ENCODE measurements at regions of chr1 and their contacts with region 1.

Region 1: DNA sequence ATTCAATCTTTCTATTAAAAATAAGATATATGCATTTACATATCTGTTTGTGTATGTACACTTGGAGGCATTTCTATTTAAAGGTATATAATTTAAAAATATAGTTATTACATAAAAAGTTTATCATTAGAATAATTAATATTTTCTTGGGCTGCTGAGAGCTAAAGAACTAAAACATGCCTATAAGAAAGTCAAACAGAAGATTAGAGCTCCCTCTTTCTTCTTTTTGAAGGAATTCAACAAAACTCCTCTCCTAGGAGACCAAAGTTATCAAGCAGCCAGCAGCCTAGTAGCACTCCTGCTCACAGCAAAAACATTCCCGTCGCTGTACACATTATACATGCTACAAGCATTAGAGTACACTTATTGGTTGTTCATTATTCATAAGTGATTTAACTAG is 216.4 kb downstream of the VAV3 start:
- DNase-seq: no peak
- H3K4me3 ChIP-seq: no peak overlapping the region
- H3K27ac ChIP-seq: no peak overlapping the region
- H3K4me1 ChIP-seq: no peaks in the 10 kb centered on the region
- H3K27me3 ChIP-seq: no peaks in the 10 kb centered on the region
- CTCF ChIP-seq: peak in 1 of 6 experiments; percentile 37
- POLR2A ChIP-seq: no peak

Region 2: DNA sequence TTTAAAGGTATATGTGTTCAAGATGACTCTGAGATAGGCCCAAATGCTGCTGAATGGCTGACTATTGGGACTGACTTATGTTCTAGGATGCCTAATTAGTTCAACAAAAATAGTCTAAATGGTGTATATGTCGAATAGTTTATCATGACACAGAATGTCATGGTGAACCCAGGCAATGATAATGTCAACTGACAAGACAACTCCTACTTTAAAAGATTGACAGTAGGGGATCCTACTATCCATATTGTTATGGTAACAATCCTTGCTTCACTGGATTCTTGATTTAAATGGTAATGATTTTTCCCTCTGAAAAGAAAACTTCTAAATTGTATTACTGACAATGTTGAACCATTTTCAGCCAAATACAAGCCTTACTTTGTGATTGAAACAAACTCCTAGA is 328.0 kb before region 1 on chr1:
- intact Hi-C with region 1: loop called in 1 of 2 experiments (anchors 10 kb)
- DNase-seq: no peak
- H3K4me3 ChIP-seq: no peak overlapping the region
- H3K27ac ChIP-seq: no peak overlapping the region
- H3K4me1 ChIP-seq: no peaks in the 10 kb centered on the region
- H3K27me3 ChIP-seq: no peaks in the 10 kb centered on the region
- CTCF ChIP-seq: no peak
- POLR2A ChIP-seq: no peak